ENCODE measurements at regions of chr13 and their contacts with region 1.

Region 1: GRCh38 chr13:90867336-90867683 is 480.2 kb upstream of the MIR17HG start:
- DNase-seq: peak; percentile 58
- H3K4me3 Mint-ChIP-seq: peak overlapping the region; percentile 44
- H3K27ac Mint-ChIP-seq: peak overlapping the region; percentile 85
- H3K4me1 Mint-ChIP-seq: peaks cover 10% of the 10 kb centered on the region
- H3K27me3 Mint-ChIP-seq: no peaks in the 10 kb centered on the region
- CTCF ChIP-seq: no peak

Region 2: DNA sequence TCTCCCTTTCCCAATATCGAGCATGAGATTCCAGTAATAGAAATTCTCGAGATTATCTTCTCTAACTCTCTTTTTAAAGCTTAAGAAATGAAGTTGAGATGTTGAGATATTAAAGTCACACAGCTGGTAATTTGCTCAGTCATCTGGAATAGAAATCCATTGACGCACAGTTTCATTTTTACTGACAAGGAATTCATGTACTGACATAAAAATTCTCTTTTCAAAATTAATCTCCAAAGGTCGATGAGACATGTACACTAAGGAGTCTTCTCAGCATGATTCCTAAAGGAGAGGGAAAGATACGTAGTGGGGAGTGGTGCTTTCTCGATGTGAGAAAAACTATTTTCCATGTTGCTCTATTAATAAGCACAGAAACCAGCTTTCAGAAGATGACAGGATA is 1159.3 kb before region 1 on chr13:
- CTCF ChIA-PET with region 1: no interaction called
- intact Hi-C with region 1: loop called (anchors 5 kb)
- DNase-seq: no peak
- H3K4me3 Mint-ChIP-seq: no peak overlapping the region
- H3K27ac Mint-ChIP-seq: no peak overlapping the region
- H3K4me1 Mint-ChIP-seq: no peaks in the 10 kb centered on the region
- H3K27me3 Mint-ChIP-seq: no peaks in the 10 kb centered on the region
- CTCF ChIP-seq: no peak

Region 3: GRCh38 chr13:90302107-90302506 is 565.2 kb before region 1 on chr13:
- CTCF ChIA-PET with region 1: no interaction called
- intact Hi-C with region 1: loop called (anchors 2 kb)
- DNase-seq: no peak
- H3K4me3 Mint-ChIP-seq: no peak overlapping the region
- H3K27ac Mint-ChIP-seq: no peak overlapping the region
- H3K4me1 Mint-ChIP-seq: no peaks in the 10 kb centered on the region
- H3K27me3 Mint-ChIP-seq: no peaks in the 10 kb centered on the region
- CTCF ChIP-seq: no peak

Region 4: GRCh38 chr13:90447735-90448103 is 419.6 kb before region 1 on chr13:
- CTCF ChIA-PET with region 1: no interaction called
- intact Hi-C with region 1: loop called (anchors 2 kb)
- DNase-seq: no peak
- H3K4me3 Mint-ChIP-seq: no peak overlapping the region
- H3K27ac Mint-ChIP-seq: peak overlapping the region; percentile 84
- H3K4me1 Mint-ChIP-seq: peaks cover 12% of the 10 kb centered on the region
- H3K27me3 Mint-ChIP-seq: no peaks in the 10 kb centered on the region
- CTCF ChIP-seq: no peak

Region 5: DNA sequence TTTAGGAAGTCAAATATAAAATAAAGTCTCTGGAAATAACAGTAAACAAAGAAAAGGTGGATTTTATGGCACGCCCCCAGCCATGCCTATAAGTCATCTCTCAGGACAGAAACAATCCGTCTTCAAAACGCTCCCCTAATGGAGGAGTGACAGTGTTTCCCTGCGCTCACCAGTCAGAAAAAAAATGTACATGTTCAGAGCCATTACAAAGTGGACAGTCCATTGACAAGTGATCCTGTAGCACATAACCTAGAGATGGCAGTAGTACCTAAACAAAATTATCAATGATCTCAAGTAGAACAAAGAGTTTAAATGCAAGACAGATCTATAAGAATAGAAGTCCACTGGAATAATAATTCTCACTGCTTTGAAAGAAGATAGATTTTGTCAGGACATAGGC is 411.5 kb before region 1 on chr13:
- CTCF ChIA-PET with region 1: interaction called, 5 read pairs
- intact Hi-C with region 1: loop called (anchors 2 kb)
- DNase-seq: no peak
- H3K4me3 Mint-ChIP-seq: no peak overlapping the region
- H3K27ac Mint-ChIP-seq: no peak overlapping the region
- H3K4me1 Mint-ChIP-seq: no peaks in the 10 kb centered on the region
- H3K27me3 Mint-ChIP-seq: no peaks in the 10 kb centered on the region
- CTCF ChIP-seq: no peak

Region 6: GRCh38 chr13:90910018-90910639 is 42.8 kb after region 1 on chr13:
- CTCF ChIA-PET with region 1: no interaction called
- intact Hi-C with region 1: no loop called
- DNase-seq: no peak
- H3K4me3 Mint-ChIP-seq: no peak overlapping the region
- H3K27ac Mint-ChIP-seq: no peak overlapping the region
- H3K4me1 Mint-ChIP-seq: no peaks in the 10 kb centered on the region
- H3K27me3 Mint-ChIP-seq: no peaks in the 10 kb centered on the region
- CTCF ChIP-seq: no peak

Region 7: GRCh38 chr13:91331047-91331915 is 464.0 kb after region 1 on chr13:
- CTCF ChIA-PET with region 1: no interaction called
- intact Hi-C with region 1: no loop called
- DNase-seq: no peak
- H3K4me3 Mint-ChIP-seq: no peak overlapping the region
- H3K27ac Mint-ChIP-seq: no peak overlapping the region
- H3K4me1 Mint-ChIP-seq: no peaks in the 10 kb centered on the region
- H3K27me3 Mint-ChIP-seq: no peaks in the 10 kb centered on the region
- CTCF ChIP-seq: no peak

Region 8: DNA sequence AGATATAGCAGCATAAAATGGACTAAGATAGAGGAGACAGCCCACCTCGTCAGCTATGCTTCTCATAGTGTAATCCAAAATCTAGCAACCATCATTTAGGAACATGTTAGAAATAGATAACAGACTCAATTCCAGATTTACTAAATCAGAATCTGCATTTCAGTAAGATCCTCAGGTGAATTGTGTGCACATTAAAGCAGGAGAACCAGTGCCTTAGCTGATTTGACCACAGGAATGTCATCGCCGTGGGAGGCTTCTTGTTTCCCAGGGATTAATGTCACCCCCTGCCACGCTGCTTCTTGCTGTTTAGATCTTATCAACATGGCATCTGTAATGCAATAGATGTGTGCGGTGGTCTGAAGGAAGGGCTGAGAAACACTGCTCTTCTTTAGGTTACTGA is 615.1 kb after region 1 on chr13:
- CTCF ChIA-PET with region 1: no interaction called
- intact Hi-C with region 1: no loop called
- DNase-seq: no peak
- H3K4me3 Mint-ChIP-seq: no peak overlapping the region
- H3K27ac Mint-ChIP-seq: no peak overlapping the region
- H3K4me1 Mint-ChIP-seq: no peaks in the 10 kb centered on the region
- H3K27me3 Mint-ChIP-seq: no peaks in the 10 kb centered on the region
- CTCF ChIP-seq: no peak